Esophagus muscularis mucosa (tissue), 4 donors: ENCODE measurements at regions of chr9 and their contacts with region 1.

Region 1: DNA sequence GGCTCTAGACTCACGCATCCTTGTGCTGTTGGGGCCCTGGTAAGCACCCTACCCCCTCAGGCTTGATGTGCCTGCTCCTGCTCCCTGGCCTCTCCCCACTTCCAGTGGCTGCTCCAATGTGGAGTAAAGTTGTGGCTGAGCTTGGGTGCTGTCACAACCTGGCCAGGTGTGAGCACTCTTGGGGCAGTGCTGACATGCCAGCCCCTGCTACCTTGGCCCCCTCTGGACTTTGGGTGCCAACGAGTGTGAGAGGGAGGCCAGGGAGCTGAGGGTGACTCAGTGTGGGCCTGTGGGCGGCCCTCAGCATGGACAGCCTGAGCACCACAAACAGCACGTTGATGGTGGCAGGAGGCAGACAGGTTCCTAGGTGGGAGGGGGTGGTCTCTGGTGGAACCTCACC is 870.2 kb upstream of the C9orf72 start:
- DNase-seq: no peak
- H3K4me3 ChIP-seq: no peak overlapping the region
- H3K27ac ChIP-seq: no peak overlapping the region
- H3K4me1 ChIP-seq: no peaks in the 10 kb centered on the region
- H3K27me3 ChIP-seq: no peaks in the 10 kb centered on the region
- CTCF ChIP-seq: no peak
- EP300 ChIP-seq: no peak
- POLR2A ChIP-seq: no peak

Region 2: DNA sequence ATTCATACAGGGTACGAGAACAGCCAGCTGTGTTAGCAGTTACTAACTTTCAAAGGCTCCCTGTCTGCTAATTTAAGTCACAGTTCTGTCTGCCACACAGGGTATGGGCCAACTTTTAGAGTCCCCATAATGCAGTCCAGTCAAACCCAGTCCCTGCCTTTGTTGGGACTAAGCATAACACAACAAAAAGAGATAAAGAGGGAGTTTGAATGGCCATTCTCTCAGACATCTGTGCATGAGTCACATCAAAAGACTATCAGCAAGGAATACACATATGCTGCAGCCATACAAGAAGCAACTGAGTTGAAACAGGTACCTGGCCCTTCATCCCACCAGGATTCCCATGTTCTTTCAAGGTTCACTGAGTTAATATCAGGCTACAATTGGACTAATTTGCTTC is 125.7 kb before region 1 on chr9:
- intact Hi-C with region 1: no loop called
- DNase-seq: no peak
- H3K4me3 ChIP-seq: no peak overlapping the region
- H3K27ac ChIP-seq: no peak overlapping the region
- H3K4me1 ChIP-seq: no peaks in the 10 kb centered on the region
- H3K27me3 ChIP-seq: no peaks in the 10 kb centered on the region
- CTCF ChIP-seq: no peak
- EP300 ChIP-seq: no peak
- POLR2A ChIP-seq: no peak

Region 3: GRCh38 chr9:28378231-28378630 is 65.2 kb before region 1 on chr9:
- intact Hi-C with region 1: no loop called
- DNase-seq: no peak
- H3K4me3 ChIP-seq: no peak overlapping the region
- H3K27ac ChIP-seq: no peak overlapping the region
- H3K4me1 ChIP-seq: no peaks in the 10 kb centered on the region
- H3K27me3 ChIP-seq: no peaks in the 10 kb centered on the region
- CTCF ChIP-seq: no peak
- EP300 ChIP-seq: no peak
- POLR2A ChIP-seq: no peak

Region 4: DNA sequence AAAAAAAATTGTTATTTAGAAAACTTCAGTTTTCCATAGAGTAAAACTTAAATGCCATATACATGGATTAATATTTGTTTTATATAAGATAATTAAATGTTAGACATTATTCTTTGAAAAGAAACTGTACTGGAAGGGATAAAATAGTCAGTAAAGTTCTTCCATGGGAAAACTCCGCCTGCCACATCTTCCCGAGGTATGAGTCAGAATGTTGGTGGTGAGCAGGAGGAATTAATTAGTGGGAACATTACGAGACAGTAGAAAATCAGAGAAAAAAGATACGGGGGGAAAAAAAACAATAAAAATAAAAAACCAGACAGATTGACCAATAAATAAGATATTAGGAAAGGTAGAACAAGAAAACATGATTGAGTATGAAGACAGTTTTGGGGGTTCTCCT is 60.1 kb after region 1 on chr9:
- intact Hi-C with region 1: loop called (anchors 10 kb)
- DNase-seq: no peak
- H3K4me3 ChIP-seq: no peak overlapping the region
- H3K27ac ChIP-seq: no peak overlapping the region
- H3K4me1 ChIP-seq: no peaks in the 10 kb centered on the region
- H3K27me3 ChIP-seq: no peaks in the 10 kb centered on the region
- CTCF ChIP-seq: no peak
- EP300 ChIP-seq: no peak
- POLR2A ChIP-seq: no peak